K562 (cell line): ENCODE measurements at regions of chr6 and their contacts with region 1.

Region 1: GRCh38 chr6:161228921-161229591 is 44.8 kb downstream of the AGPAT4 start:
- DNase-seq: peak in 2 of 4 experiments; percentile 76 to 87
- ATAC-seq: peak; percentile 68
- H3K4me3 ChIP-seq: no peak overlapping the region
- H3K27ac ChIP-seq: peak overlapping the region; percentile 61
- H3K4me1 ChIP-seq: peaks cover 23 to 51% of the 10 kb centered on the region in 2 experiments
- H3K27me3 ChIP-seq: no peaks in the 10 kb centered on the region
- CTCF ChIP-seq: no peak
- EP300 ChIP-seq: peak; percentile 54; the same call in 1 of the 2 replicates
- POLR2A ChIP-seq: peak; percentile 41; the same call in 1 of the 2 replicates
- RAD21 ChIP-seq: peak in 1 of 2 experiments; percentile 47; a peak in 2 of 4 replicates

Region 2: DNA sequence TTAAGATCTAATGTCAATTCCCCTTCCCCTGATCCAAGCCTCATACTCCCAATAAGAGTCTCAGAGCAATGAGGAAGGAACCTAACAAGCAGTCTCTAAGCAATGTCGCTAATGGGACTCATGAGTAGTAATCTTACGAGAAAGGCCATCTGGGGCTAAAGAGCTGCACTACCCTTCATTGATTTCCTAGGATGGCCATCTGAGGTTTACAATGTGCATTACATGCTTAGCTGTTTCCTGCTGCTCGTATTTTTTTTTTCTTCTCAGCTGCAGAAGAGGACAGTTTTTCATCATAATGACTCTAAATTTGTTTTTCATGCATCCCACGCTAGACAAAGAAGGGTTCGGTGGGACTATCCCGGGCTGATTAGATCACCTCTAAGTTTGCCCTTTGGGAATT is 684.3 kb before region 1 on chr6:
- CTCF ChIA-PET with region 1: no interaction called
- POLR2A ChIA-PET with region 1: no interaction called
- in situ Hi-C with region 1: no loop called
- intact Hi-C with region 1: no loop called
- DNase-seq: no peak
- ATAC-seq: no peak
- H3K4me3 ChIP-seq: no peak overlapping the region
- H3K27ac ChIP-seq: no peak overlapping the region
- H3K4me1 ChIP-seq: no peaks in the 10 kb centered on the region
- H3K27me3 ChIP-seq: peaks cover 5% of the 10 kb centered on the region in 2 experiments; a peak in 3 of 5 replicates
- CTCF ChIP-seq: no peak
- EP300 ChIP-seq: no peak
- POLR2A ChIP-seq: no peak
- RAD21 ChIP-seq: no peak

Region 3: GRCh38 chr6:161204866-161205557 is 24.0 kb before region 1 on chr6:
- CTCF ChIA-PET with region 1: interaction called, 5 read pairs
- POLR2A ChIA-PET with region 1: interaction called, 6 read pairs
- in situ Hi-C with region 1: no loop called
- intact Hi-C with region 1: loop called (anchors 2 kb)
- DNase-seq: peak; percentile 79 to 96 (median 87)
- ATAC-seq: peak; percentile 92
- H3K4me3 ChIP-seq: peak overlapping the region; percentile 14
- H3K27ac ChIP-seq: peak overlapping the region; percentile 77
- H3K4me1 ChIP-seq: peaks cover 15 to 47% of the 10 kb centered on the region in 2 experiments; a peak in 4 of 5 replicates
- H3K27me3 ChIP-seq: no peaks in the 10 kb centered on the region
- CTCF ChIP-seq: peak in 2 of 3 experiments; percentile 11 to 28; a peak in 3 of 6 replicates
- EP300 ChIP-seq: peak; percentile 92
- POLR2A ChIP-seq: peak; percentile 72
- RAD21 ChIP-seq: peak; percentile 37 to 59

Region 4: DNA sequence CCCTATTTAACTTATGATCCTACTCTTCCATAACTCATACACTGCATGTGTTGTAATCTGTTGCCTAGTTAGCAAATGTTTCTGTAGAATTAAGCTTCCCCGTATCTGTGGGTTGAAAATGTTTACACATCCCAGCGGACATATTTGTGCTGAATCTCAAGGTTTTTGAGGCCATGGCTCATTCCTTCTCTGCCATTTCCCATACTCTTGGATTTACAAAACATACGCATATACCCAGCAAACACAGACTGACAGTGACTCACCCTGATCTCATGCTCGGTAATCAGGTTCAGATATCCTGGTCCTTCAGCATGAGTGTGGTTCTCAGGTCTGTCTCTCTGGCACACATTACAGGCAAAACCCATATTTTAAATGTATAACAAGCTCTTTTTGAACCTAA is 13.9 kb before region 1 on chr6:
- CTCF ChIA-PET with region 1: interaction called, 3 read pairs
- POLR2A ChIA-PET with region 1: interaction called, 10 read pairs
- in situ Hi-C with region 1: no loop called
- intact Hi-C with region 1: no loop called
- DNase-seq: peak in 2 of 4 experiments; percentile 65 to 66
- ATAC-seq: peak; percentile 78
- H3K4me3 ChIP-seq: no peak overlapping the region
- H3K27ac ChIP-seq: peak overlapping the region; percentile 56
- H3K4me1 ChIP-seq: peaks cover 0 to 10% of the 10 kb centered on the region in 2 experiments; a peak in 3 of 5 replicates
- H3K27me3 ChIP-seq: no peaks in the 10 kb centered on the region; a peak in 1 of 5 replicates
- CTCF ChIP-seq: no peak
- EP300 ChIP-seq: no peak
- POLR2A ChIP-seq: no peak
- RAD21 ChIP-seq: no peak

Region 5: GRCh38 chr6:161242779-161243693 is 14.0 kb after region 1 on chr6:
- CTCF ChIA-PET with region 1: no interaction called
- POLR2A ChIA-PET with region 1: interaction called, 45 read pairs
- in situ Hi-C with region 1: no loop called
- intact Hi-C with region 1: no loop called
- DNase-seq: no peak
- ATAC-seq: peak; percentile 42
- H3K4me3 ChIP-seq: no peak overlapping the region
- H3K27ac ChIP-seq: no peak overlapping the region
- H3K4me1 ChIP-seq: peaks cover 7 to 20% of the 10 kb centered on the region in 2 experiments; a peak in 4 of 5 replicates
- H3K27me3 ChIP-seq: no peaks in the 10 kb centered on the region
- CTCF ChIP-seq: no peak
- EP300 ChIP-seq: no peak
- POLR2A ChIP-seq: no peak
- RAD21 ChIP-seq: no peak

Region 6: DNA sequence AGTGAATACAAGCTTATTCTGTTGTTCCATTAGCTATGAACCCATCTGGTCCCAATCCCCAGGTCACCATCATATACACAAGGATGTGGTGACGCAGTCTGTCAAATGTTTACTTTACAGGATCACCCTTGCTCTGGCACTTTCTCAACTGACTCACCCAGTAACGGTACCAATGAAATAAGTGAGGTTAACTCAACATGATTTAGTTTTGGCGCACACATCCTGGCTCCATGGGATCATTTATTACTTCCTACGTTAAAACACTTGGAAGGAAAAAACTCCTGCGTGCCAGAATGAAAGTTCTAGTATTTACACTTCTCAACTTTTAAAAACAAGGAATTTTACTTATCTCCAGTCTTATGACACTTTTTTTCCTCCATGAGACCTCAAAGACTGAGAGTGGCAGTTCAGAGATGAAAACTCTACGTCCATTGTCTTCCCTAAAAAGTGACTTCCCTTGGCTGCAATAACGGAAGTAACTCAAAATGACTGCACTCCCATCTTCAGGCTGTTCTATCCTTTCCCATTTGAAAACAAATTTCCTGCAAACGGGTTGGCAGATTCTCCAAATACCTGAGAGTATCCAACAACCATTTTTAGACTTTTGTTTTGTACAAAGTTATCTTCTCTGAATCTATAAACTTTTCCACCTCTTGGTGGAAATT is 28.9 kb after region 1 on chr6:
- CTCF ChIA-PET with region 1: no interaction called
- POLR2A ChIA-PET with region 1: interaction called, 7 read pairs
- in situ Hi-C with region 1: no loop called
- intact Hi-C with region 1: loop called (anchors 1 kb)
- DNase-seq: no peak
- ATAC-seq: no peak
- H3K4me3 ChIP-seq: no peak overlapping the region
- H3K27ac ChIP-seq: peak overlapping the region; percentile 23; the same call in 1 of the 3 replicates
- H3K4me1 ChIP-seq: peaks cover 35 to 71% of the 10 kb centered on the region in 2 experiments; a peak in 4 of 5 replicates
- H3K27me3 ChIP-seq: no peaks in the 10 kb centered on the region; a peak in 1 of 5 replicates
- CTCF ChIP-seq: no peak; a peak in 1 of 6 replicates
- EP300 ChIP-seq: no peak
- POLR2A ChIP-seq: no peak
- RAD21 ChIP-seq: no peak